A549 (cell line): ENCODE measurements at regions of chr19 and their contacts with region 1.

Region 1: DNA sequence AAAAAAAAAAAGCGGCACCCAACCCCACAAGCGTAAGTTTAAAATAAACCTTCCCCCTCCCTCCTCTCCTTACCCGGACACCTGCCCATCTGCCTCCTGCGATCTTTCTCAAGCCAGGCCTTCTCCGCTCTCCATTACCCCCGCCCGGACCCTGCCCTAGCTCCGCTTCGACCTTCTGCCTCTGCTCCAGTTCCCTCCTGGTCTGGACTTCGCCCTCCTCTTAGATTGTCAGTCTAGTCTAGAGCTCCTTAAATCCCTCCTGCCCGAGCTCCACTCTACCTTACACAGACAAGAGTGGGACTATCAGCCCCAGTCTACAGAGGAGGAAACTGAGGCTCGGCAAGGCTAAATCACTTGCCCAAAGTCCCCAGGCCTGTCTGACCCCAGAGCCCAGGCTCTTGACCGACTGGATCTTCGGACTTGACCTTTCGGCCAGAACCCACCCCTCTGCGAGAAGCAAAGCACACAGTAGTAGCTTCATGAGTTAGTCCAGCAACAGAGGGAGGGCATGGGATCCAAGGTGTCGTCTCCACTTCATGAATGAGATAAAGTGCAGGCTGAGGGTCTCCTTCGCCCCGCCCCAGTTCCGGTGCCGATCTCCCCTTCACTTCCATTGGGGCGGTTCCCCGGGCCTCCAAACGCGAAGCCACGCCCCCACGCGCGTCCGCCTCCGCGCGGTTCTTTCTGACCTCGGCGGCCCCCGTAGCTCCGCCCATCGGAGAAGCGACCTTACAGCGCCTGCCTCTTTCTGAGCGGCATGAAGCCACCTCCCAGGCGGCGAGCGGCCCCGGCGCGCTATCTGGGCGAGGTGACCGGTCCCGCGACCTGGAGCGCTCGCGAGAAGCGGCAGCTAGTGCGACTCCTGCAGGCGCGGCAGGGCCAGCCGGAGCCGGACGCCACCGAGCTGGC is at the start of gene SNAPC2:
- DNase-seq: peak; percentile 60 to 94
- ATAC-seq: peak; percentile 27 to 71
- H3K4me3 ChIP-seq: peak within 1 kb of the TSS; percentile 72
- H3K27ac ChIP-seq: peak within 1 kb of the TSS; percentile 95 to 96
- H3K4me1 ChIP-seq: peaks cover 19% of the 10 kb centered on the region
- CTCF ChIP-seq: no peak
- EP300 ChIP-seq: no peak
- POLR2A ChIP-seq: peak; percentile 51
- RAD21 ChIP-seq: no peak
- polyA plus RNA-seq, gene SNAPC2: 8.8 and 9.2 TPM in 2 replicates

Region 2: GRCh38 chr19:7852851-7853769 is 66.8 kb before region 1 on chr19:
- CTCF ChIA-PET with region 1: interaction called, 17 read pairs
- POLR2A ChIA-PET with region 1: no interaction called
- DNase-seq: peak; percentile 75 to 78
- ATAC-seq: peak; percentile 76 to 95
- H3K4me3 ChIP-seq: no peak overlapping the region
- H3K27ac ChIP-seq: no peak overlapping the region
- H3K4me1 ChIP-seq: peaks cover 3% of the 10 kb centered on the region; the same call in 1 of the 3 replicates
- CTCF ChIP-seq: peak; percentile 71
- EP300 ChIP-seq: no peak
- POLR2A ChIP-seq: no peak
- RAD21 ChIP-seq: peak; percentile 70 to 76

Region 3: GRCh38 chr19:7903244-7904073 is 16.4 kb before region 1 on chr19 and contains the start of gene MAP2K7:
- CTCF ChIA-PET with region 1: interaction called, 14 read pairs
- POLR2A ChIA-PET with region 1: interaction called, 17 read pairs
- DNase-seq: peak; percentile 86 to 98
- ATAC-seq: peak; percentile 65 to 83
- H3K4me3 ChIP-seq: peak within 1 kb of the TSS; percentile 72
- H3K27ac ChIP-seq: peak within 1 kb of the TSS; percentile 90 to 97
- H3K4me1 ChIP-seq: peaks cover 8% of the 10 kb centered on the region
- CTCF ChIP-seq: peak; percentile 58
- EP300 ChIP-seq: no peak
- POLR2A ChIP-seq: peak; percentile 98
- RAD21 ChIP-seq: peak; percentile 17 to 39; a peak in 3 of 5 replicates
- polyA plus RNA-seq, gene MAP2K7: 5.5 TPM in 2 replicates

Region 4: GRCh38 chr19:7908742-7909461 is 11.0 kb before region 1 on chr19:
- CTCF ChIA-PET with region 1: interaction called, 14 read pairs
- POLR2A ChIA-PET with region 1: interaction called, 17 read pairs
- DNase-seq: no peak
- ATAC-seq: peak; percentile 7 to 46; a peak in 3 of 6 replicates
- H3K4me3 ChIP-seq: no peak overlapping the region
- H3K27ac ChIP-seq: no peak overlapping the region
- H3K4me1 ChIP-seq: peaks cover 8% of the 10 kb centered on the region
- CTCF ChIP-seq: no peak
- EP300 ChIP-seq: no peak
- POLR2A ChIP-seq: no peak
- RAD21 ChIP-seq: no peak